Ascending aorta (tissue), 2 donors: ENCODE measurements at regions of chr22 and their contacts with region 1.

Region 1: DNA sequence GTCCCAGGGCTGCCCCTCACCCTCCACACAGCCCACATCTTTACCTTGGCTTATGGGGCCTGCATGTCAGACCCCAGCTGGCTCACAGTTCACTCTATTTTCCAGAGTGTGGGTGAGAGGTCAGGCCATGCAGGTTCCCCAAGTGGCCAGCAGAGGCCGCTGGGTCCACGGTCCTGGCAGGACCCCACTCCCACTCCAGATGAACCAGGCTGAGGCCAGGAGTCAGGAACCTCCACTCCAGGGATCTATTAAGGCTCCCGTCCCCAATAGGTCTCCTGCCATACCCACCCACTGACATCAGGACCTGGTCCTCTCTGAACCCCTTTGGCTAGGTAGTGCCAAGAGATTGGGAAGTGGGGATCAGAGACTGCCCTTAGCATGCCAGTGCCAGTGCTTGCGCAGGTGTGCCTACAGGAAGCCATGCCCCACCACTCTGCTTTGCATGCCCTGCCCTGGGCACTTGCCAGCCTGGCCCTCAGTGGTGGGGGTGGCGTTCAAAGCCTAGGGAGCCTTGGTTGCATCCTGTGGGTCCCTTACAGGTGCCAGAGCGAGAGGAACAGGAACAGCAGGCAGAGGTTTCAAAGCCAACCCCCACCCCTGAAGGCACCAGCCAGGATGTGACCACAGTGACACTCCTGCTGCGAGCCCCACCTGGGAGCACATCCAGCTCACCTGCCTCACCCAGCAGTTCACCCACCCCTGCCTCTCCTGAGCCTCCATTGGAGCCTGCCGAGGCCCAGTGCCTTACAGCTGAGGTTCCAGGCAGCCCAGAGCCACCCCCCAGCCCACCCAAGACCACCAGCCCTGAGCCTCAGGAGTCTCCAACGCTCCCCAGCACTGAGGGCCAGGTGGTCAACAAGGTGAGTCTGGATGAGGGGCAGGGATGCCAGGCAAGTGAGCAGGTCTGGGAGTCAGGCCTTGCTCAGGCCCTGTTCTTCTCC is 8.3 kb downstream of the SMTN start:
- DNase-seq: peak in 1 of 2 donors; percentile 78
- H3K4me3 ChIP-seq: peak overlapping the region in 1 of 2 donors; percentile 16
- H3K27ac ChIP-seq: peak overlapping the region; percentile 98
- H3K4me1 ChIP-seq: peaks cover 46 to 78% of the 10 kb centered on the region in 2 donors
- H3K27me3 ChIP-seq: no peaks in the 10 kb centered on the region
- CTCF ChIP-seq: peak; percentile 73 to 83 (median 81)

Region 2: DNA sequence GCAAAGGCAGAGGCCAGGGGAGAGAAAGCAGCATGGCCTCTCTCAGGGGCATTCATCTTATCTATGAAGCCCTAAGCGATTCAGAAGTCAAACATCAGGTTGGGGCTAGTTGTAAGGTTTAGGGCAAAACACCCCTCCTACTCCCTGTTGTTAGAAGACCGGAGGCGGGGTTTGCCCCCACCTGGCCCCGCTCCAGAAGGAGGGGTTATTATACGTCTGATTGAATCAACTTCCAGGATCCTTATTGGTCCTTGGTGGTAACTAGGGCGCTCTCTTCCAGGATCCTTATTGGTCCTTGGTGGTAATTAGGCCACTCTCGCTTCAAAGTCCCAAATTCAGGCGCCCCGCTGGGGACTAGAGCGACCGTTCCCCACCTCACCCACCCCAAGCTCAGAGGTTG is 20.5 kb before region 1 on chr22:
- intact Hi-C with region 1: no loop called
- DNase-seq: no peak
- H3K4me3 ChIP-seq: no peak overlapping the region
- H3K27ac ChIP-seq: no peak overlapping the region
- H3K4me1 ChIP-seq: no peaks in the 10 kb centered on the region
- H3K27me3 ChIP-seq: no peaks in the 10 kb centered on the region
- CTCF ChIP-seq: no peak

Region 3: GRCh38 chr22:31148953-31149627 is 59.7 kb after region 1 on chr22:
- intact Hi-C with region 1: loop called (anchors 1 kb)
- DNase-seq: peak in 1 of 2 donors; percentile 87
- H3K4me3 ChIP-seq: no peak overlapping the region
- H3K27ac ChIP-seq: peak overlapping the region; percentile 71 to 81
- H3K4me1 ChIP-seq: peaks cover 5 to 13% of the 10 kb centered on the region in 2 donors
- H3K27me3 ChIP-seq: no peaks in the 10 kb centered on the region
- CTCF ChIP-seq: peak; percentile 90 to 93 (median 90)